CD4-positive, alpha-beta memory T cell (primary cell): ENCODE measurements at regions of chr2 and their contacts with region 1.

Region 1: GRCh38 chr2:174697255-174697654 is 67.0 kb downstream of the CHRNA1 start:
- DNase-seq: peak; percentile 44 to 57 (median 54)
- H3K4me3 ChIP-seq: no peak overlapping the region
- H3K4me3 Mint-ChIP-seq: no peak overlapping the region
- H3K27ac ChIP-seq: no peak overlapping the region
- H3K27ac Mint-ChIP-seq: no peak overlapping the region
- H3K4me1 ChIP-seq: no peaks in the 10 kb centered on the region
- H3K4me1 Mint-ChIP-seq: peaks cover 0 to 5% (median 4%) of the 10 kb centered on the region in 4 donors
- H3K27me3 ChIP-seq: no peaks in the 10 kb centered on the region
- H3K27me3 Mint-ChIP-seq: peaks cover 3 to 4% of the 10 kb centered on the region in 2 donors

Region 2: DNA sequence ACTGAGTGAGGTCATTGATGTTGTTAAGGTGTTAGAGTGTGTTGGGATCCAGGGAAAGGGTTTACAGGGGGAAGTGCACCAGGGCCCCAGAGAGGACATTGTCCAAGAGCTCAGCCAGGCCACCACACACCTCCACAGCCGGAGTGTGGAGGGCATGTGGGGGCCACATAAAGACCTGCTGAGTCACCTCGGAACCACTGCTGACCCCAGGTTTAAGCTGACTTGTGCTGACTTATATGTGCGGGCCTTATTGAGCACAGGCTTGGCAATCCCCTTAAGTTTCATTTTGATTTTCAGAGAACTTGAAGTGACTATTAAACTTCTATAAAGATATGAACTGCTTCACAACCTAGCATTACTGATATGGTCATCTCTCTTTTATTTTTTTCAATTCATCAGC is 1787.8 kb before region 1 on chr2:
- CTCF ChIA-PET with region 1: no interaction called
- POLR2A ChIA-PET with region 1: no interaction called
- intact Hi-C with region 1: no loop called
- DNase-seq: no peak
- H3K4me3 ChIP-seq: no peak overlapping the region
- H3K4me3 Mint-ChIP-seq: no peak overlapping the region
- H3K27ac ChIP-seq: no peak overlapping the region
- H3K27ac Mint-ChIP-seq: no peak overlapping the region
- H3K4me1 ChIP-seq: no peaks in the 10 kb centered on the region
- H3K4me1 Mint-ChIP-seq: peaks cover 0 to 11% (median 0%) of the 10 kb centered on the region in 4 donors
- H3K27me3 ChIP-seq: no peaks in the 10 kb centered on the region
- H3K27me3 Mint-ChIP-seq: peaks cover 2 to 4% of the 10 kb centered on the region in 2 donors

Region 3: DNA sequence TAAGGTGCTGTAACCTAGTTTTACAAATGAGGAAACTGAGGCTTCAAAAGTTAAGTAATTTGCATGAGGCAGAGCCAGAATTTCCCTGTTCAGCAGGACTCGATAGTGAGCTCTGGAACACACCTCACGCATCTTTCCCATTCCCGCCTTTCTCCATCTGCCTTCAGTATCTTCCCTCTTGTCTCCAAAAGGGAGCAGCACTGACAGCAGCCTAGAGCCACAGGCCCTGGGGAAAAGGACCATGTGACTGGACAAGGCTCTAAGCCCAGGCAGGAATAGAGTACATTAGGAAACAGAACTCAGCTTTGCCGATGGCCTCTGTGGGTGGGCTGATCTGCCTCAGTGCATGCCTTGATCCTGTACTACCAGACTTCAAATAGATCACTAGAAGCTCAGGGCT is 231.9 kb before region 1 on chr2:
- CTCF ChIA-PET with region 1: interaction called, 64 read pairs
- POLR2A ChIA-PET with region 1: no interaction called
- intact Hi-C with region 1: no loop called
- DNase-seq: no peak
- H3K4me3 ChIP-seq: no peak overlapping the region
- H3K4me3 Mint-ChIP-seq: no peak overlapping the region
- H3K27ac ChIP-seq: no peak overlapping the region
- H3K27ac Mint-ChIP-seq: peak overlapping the region in 1 of 7 donors; percentile 60
- H3K4me1 ChIP-seq: no peaks in the 10 kb centered on the region
- H3K4me1 Mint-ChIP-seq: no peaks in the 10 kb centered on the region
- H3K27me3 ChIP-seq: no peaks in the 10 kb centered on the region
- H3K27me3 Mint-ChIP-seq: no peaks in the 10 kb centered on the region

Region 4: DNA sequence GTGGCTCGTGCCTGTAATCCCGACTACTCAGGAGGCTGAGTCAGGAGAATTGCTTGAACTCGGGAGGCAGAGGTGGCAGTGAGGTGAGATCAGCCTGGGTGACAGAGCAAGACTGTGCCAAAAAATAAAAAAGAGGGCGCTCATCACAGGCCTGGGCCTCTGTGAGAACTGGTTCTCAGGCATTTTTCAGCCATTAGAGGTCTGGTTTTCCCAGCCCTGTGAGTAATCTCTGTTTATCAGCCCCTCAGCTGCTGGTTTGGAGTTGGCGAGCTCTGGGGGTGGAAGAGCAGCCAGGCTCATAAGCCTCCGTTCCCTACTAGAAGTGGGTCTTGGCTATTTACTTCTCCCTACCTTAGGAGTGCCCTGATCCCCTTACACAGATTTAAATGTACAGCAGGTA is 14.0 kb after region 1 on chr2:
- CTCF ChIA-PET with region 1: interaction called, 12 read pairs
- POLR2A ChIA-PET with region 1: no interaction called
- intact Hi-C with region 1: no loop called
- DNase-seq: no peak
- H3K4me3 ChIP-seq: no peak overlapping the region
- H3K4me3 Mint-ChIP-seq: no peak overlapping the region
- H3K27ac ChIP-seq: no peak overlapping the region
- H3K27ac Mint-ChIP-seq: no peak overlapping the region
- H3K4me1 ChIP-seq: peaks cover 2% of the 10 kb centered on the region
- H3K4me1 Mint-ChIP-seq: peaks cover 0 to 2% (median 1%) of the 10 kb centered on the region in 4 donors
- H3K27me3 ChIP-seq: peaks cover 4% of the 10 kb centered on the region
- H3K27me3 Mint-ChIP-seq: peaks cover 6 to 8% of the 10 kb centered on the region in 2 donors

Region 5: DNA sequence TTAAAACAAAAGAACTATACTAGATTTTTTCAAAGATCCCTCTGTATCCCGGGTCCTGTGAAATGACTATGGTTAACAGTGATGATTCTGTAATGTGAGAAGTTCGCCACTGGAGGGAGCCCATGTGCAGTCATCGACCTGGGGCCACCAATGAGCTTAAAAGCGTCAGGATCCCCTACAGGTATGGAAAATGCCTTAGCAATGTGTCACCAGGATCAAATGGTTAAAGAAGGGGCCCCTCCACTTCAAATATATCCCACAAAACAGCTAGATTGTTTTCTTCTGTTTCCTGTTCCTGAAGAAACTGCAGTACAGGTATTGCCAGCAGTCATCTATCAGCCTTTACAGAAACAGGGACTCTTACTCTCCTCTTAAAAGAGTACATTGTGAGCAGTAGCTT is 51.7 kb after region 1 on chr2:
- CTCF ChIA-PET with region 1: interaction called, 153 read pairs
- POLR2A ChIA-PET with region 1: no interaction called
- intact Hi-C with region 1: loop called (anchors 1 kb)
- DNase-seq: peak; percentile 72 to 76 (median 73)
- H3K4me3 ChIP-seq: no peak overlapping the region
- H3K4me3 Mint-ChIP-seq: peak overlapping the region in 2 of 8 donors; percentile 53 to 71
- H3K27ac ChIP-seq: no peak overlapping the region
- H3K27ac Mint-ChIP-seq: peak overlapping the region; percentile 66 to 95 (median 89)
- H3K4me1 ChIP-seq: peaks cover 50% of the 10 kb centered on the region
- H3K4me1 Mint-ChIP-seq: peaks cover 27 to 46% (median 39%) of the 10 kb centered on the region in 4 donors
- H3K27me3 ChIP-seq: no peaks in the 10 kb centered on the region
- H3K27me3 Mint-ChIP-seq: no peaks in the 10 kb centered on the region

Region 6: DNA sequence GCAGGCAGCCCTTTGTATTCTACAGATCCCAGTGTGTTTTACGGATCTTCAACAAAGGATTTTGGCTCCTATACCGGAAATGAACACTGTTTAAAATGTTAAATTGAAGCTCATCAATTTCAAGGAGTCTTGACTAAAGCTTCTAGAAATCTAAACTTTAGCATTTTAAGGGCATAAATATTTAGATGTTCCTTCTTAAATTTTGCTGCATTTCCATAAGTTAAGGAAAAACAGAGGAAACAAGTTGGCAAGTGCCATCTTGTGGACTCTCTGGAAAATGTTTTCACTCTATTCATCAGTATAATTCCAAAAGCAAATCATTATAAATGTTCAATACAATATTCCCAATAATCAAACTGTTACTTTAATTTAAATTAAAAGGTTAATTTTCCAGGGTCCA is 288.4 kb after region 1 on chr2:
- CTCF ChIA-PET with region 1: interaction called, 104 read pairs
- POLR2A ChIA-PET with region 1: no interaction called
- intact Hi-C with region 1: loop called (anchors 1 kb)
- DNase-seq: no peak
- H3K4me3 ChIP-seq: no peak overlapping the region
- H3K4me3 Mint-ChIP-seq: no peak overlapping the region
- H3K27ac ChIP-seq: no peak overlapping the region
- H3K27ac Mint-ChIP-seq: no peak overlapping the region
- H3K4me1 ChIP-seq: no peaks in the 10 kb centered on the region
- H3K4me1 Mint-ChIP-seq: peaks cover 4 to 8% (median 6%) of the 10 kb centered on the region in 4 donors
- H3K27me3 ChIP-seq: peaks cover 3% of the 10 kb centered on the region
- H3K27me3 Mint-ChIP-seq: peaks cover 2 to 3% of the 10 kb centered on the region in 2 donors

Region 7: GRCh38 chr2:175630280-175631244 is 933.3 kb after region 1 on chr2:
- CTCF ChIA-PET with region 1: no interaction called
- POLR2A ChIA-PET with region 1: no interaction called
- intact Hi-C with region 1: no loop called
- DNase-seq: no peak
- H3K4me3 ChIP-seq: no peak overlapping the region
- H3K4me3 Mint-ChIP-seq: no peak overlapping the region
- H3K27ac ChIP-seq: no peak overlapping the region
- H3K27ac Mint-ChIP-seq: no peak overlapping the region
- H3K4me1 ChIP-seq: no peaks in the 10 kb centered on the region
- H3K4me1 Mint-ChIP-seq: no peaks in the 10 kb centered on the region
- H3K27me3 ChIP-seq: no peaks in the 10 kb centered on the region
- H3K27me3 Mint-ChIP-seq: peaks cover 0 to 5% of the 10 kb centered on the region in 2 donors

Region 8: DNA sequence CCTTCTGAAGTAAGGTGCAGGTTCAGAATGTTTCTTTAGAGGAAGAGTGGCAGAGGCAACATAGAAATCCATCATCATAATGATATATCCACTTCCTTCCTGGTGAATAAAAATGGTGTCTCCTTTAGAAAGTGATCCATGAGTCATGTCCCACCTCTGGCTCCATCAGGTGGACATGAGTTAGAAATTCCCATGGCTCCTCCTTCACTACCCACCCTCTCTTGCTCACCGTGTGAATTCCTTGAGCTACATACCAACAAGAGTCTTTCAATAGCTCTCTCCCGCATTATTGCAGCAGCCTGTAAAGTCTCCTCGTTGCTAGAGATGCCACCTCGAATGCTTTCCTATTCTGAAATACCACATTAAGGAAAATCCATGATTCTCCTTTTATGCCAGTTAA is 987.2 kb after region 1 on chr2:
- CTCF ChIA-PET with region 1: no interaction called
- POLR2A ChIA-PET with region 1: no interaction called
- intact Hi-C with region 1: loop called (anchors 10 kb)
- DNase-seq: no peak
- H3K4me3 ChIP-seq: no peak overlapping the region
- H3K4me3 Mint-ChIP-seq: no peak overlapping the region
- H3K27ac ChIP-seq: no peak overlapping the region
- H3K27ac Mint-ChIP-seq: no peak overlapping the region
- H3K4me1 ChIP-seq: no peaks in the 10 kb centered on the region
- H3K4me1 Mint-ChIP-seq: no peaks in the 10 kb centered on the region
- H3K27me3 ChIP-seq: no peaks in the 10 kb centered on the region
- H3K27me3 Mint-ChIP-seq: peaks cover 9 to 14% of the 10 kb centered on the region in 2 donors